ENCODE measurements at regions of chr17 and their contacts with region 1.

Region 1: DNA sequence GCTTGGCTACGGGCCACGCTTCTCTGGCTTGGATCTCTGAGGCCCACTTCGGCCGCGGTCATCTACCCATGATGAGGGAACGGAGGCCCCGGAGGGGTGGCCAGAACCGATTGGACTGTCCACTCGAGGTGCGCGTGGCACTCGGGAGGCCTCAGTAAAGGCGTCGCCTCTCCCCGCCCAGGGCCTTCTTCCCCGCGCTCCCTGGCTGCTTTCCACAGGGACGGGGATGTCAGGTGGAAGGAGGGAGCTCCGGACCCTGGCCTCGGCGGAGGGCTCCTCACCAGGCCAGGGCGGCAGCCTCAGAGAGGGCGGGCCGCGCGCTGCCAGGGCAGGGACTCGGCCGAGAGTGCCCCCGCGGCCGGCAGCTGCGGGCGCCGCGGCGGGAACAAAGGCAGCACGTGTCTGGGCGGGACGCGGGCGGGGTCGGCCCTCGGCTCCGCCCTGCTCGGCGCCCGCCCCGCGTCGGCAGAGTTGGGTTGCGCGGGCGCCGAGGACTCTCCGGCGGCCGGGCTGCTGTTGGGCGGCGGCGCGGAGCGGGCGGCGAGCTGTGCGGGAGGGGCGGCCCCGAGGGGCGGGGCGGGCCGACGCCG is 587 bp upstream of the CDK5R1 start:
- DNase-seq: peak; percentile 49
- ATAC-seq: peak; percentile 78
- H3K4me3 ChIP-seq: peak overlapping the region; percentile 47 to 67 (median 64); a peak in 5 of 6 replicates
- H3K27ac ChIP-seq: peak overlapping the region; percentile 64
- H3K4me1 ChIP-seq: peaks cover 43% of the 10 kb centered on the region
- H3K27me3 ChIP-seq: no peaks in the 10 kb centered on the region
- CTCF ChIP-seq: no peak
- EP300 ChIP-seq: no peak
- POLR2A ChIP-seq: peak; percentile 28 to 38; a peak in 2 of 4 replicates
- RAD21 ChIP-seq: peak; percentile 6; the same call in 1 of the 2 replicates

Region 2: GRCh38 chr17:32444308-32445073 is 41.7 kb before region 1 on chr17 and contains the start of gene PSMD11:
- CTCF ChIA-PET with region 1: no interaction called
- POLR2A ChIA-PET with region 1: interaction called, 13 read pairs
- in situ Hi-C with region 1: no loop called
- intact Hi-C with region 1: no loop called
- DNase-seq: peak; percentile 92
- ATAC-seq: peak; percentile 97
- H3K4me3 ChIP-seq: peak within 1 kb of the TSS; percentile 81 to 97 (median 88)
- H3K27ac ChIP-seq: peak within 1 kb of the TSS; percentile 80
- H3K4me1 ChIP-seq: peaks cover 58% of the 10 kb centered on the region
- H3K27me3 ChIP-seq: no peaks in the 10 kb centered on the region
- CTCF ChIP-seq: peak; percentile 93; the same call in 1 of the 2 replicates
- EP300 ChIP-seq: 0 out of 4 replicates have a peak, but pooled peaks of 1 of the 2 experiments have one; percentile 10
- POLR2A ChIP-seq: peak; percentile 58 to 75
- RAD21 ChIP-seq: peak; percentile 78
- total RNA-seq, gene PSMD11: 152 and 233 TPM in 2 replicates

Region 3: GRCh38 chr17:32503251-32504165 is 17.3 kb after region 1 on chr17:
- CTCF ChIA-PET with region 1: no interaction called
- POLR2A ChIA-PET with region 1: no interaction called
- in situ Hi-C with region 1: no loop called
- intact Hi-C with region 1: no loop called
- DNase-seq: no peak
- ATAC-seq: no peak
- H3K4me3 ChIP-seq: no peak overlapping the region
- H3K27ac ChIP-seq: no peak overlapping the region
- H3K4me1 ChIP-seq: peaks cover 16% of the 10 kb centered on the region
- H3K27me3 ChIP-seq: no peaks in the 10 kb centered on the region
- CTCF ChIP-seq: no peak
- EP300 ChIP-seq: no peak
- POLR2A ChIP-seq: no peak
- RAD21 ChIP-seq: no peak